Naive thymus-derived CD4-positive, alpha-beta T cell (primary cell): ENCODE measurements at regions of chr2 and their contacts with region 1.

Region 1: GRCh38 chr2:27954771-27955383 is 64.3 kb downstream of the BABAM2 start:
- DNase-seq: peak in 3 of 9 donors; percentile 11 to 21 (median 20)
- ATAC-seq: peak; percentile 75
- H3K4me3 ChIP-seq: no peak overlapping the region
- H3K4me3 Mint-ChIP-seq: peak overlapping the region in 9 of 10 donors; percentile 31 to 68 (median 53)
- H3K27ac ChIP-seq: no peak overlapping the region
- H3K27ac Mint-ChIP-seq: peak overlapping the region in 8 of 9 donors; percentile 30 to 84 (median 55)
- H3K4me1 ChIP-seq: peaks cover 17 to 30% of the 10 kb centered on the region in 2 donors
- H3K4me1 Mint-ChIP-seq: peaks cover 34 to 82% (median 69%) of the 10 kb centered on the region in 7 donors
- H3K27me3 ChIP-seq: no peaks in the 10 kb centered on the region
- H3K27me3 Mint-ChIP-seq: no peaks in the 10 kb centered on the region

Region 2: GRCh38 chr2:27901234-27901633 is 53.6 kb before region 1 on chr2:
- CTCF ChIA-PET with region 1: no interaction called
- POLR2A ChIA-PET with region 1: no interaction called
- intact Hi-C with region 1: no loop called
- DNase-seq: no peak
- ATAC-seq: no peak
- H3K4me3 ChIP-seq: no peak overlapping the region
- H3K4me3 Mint-ChIP-seq: no peak overlapping the region
- H3K27ac ChIP-seq: no peak overlapping the region
- H3K27ac Mint-ChIP-seq: no peak overlapping the region
- H3K4me1 ChIP-seq: no peaks in the 10 kb centered on the region
- H3K4me1 Mint-ChIP-seq: peaks cover 20 to 53% (median 35%) of the 10 kb centered on the region in 7 donors
- H3K27me3 ChIP-seq: no peaks in the 10 kb centered on the region
- H3K27me3 Mint-ChIP-seq: no peaks in the 10 kb centered on the region

Region 3: GRCh38 chr2:27966483-27966882 is 11.6 kb after region 1 on chr2:
- CTCF ChIA-PET with region 1: no interaction called
- POLR2A ChIA-PET with region 1: no interaction called
- intact Hi-C with region 1: loop called in 1 of 2 experiments (anchors 1 kb)
- DNase-seq: no peak
- ATAC-seq: no peak
- H3K4me3 ChIP-seq: no peak overlapping the region
- H3K4me3 Mint-ChIP-seq: peak overlapping the region in 9 of 10 donors; percentile 4 to 84 (median 38)
- H3K27ac ChIP-seq: no peak overlapping the region
- H3K27ac Mint-ChIP-seq: peak overlapping the region in 8 of 9 donors; percentile 3 to 93 (median 70)
- H3K4me1 ChIP-seq: peaks cover 14 to 18% of the 10 kb centered on the region in 2 donors
- H3K4me1 Mint-ChIP-seq: peaks cover 22 to 55% (median 37%) of the 10 kb centered on the region in 7 donors
- H3K27me3 ChIP-seq: no peaks in the 10 kb centered on the region
- H3K27me3 Mint-ChIP-seq: no peaks in the 10 kb centered on the region

Region 4: DNA sequence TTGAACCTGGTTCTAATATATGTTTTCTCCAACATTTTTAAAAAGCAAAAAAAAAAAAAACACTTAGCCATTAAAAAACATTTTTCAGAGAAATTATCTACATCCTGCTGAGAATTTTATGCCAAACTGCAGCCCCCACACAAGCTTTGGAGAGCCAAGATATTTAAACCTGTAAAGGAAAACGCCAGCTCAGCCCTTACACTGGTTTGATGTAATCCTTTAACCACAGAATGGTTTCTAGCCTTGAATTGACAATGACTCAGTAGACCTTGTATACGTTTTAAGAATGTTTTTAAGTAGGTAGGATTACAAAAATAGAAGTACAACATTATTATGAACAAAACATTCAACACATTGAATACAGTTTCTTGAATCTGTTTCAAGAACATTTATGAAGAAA is 49.2 kb after region 1 on chr2:
- CTCF ChIA-PET with region 1: no interaction called
- POLR2A ChIA-PET with region 1: no interaction called
- intact Hi-C with region 1: loop called in 1 of 2 experiments (anchors 5 kb)
- DNase-seq: no peak
- ATAC-seq: no peak
- H3K4me3 ChIP-seq: no peak overlapping the region
- H3K4me3 Mint-ChIP-seq: peak overlapping the region in 2 of 10 donors; percentile 0 to 10
- H3K27ac ChIP-seq: no peak overlapping the region
- H3K27ac Mint-ChIP-seq: no peak overlapping the region
- H3K4me1 ChIP-seq: no peaks in the 10 kb centered on the region
- H3K4me1 Mint-ChIP-seq: peaks cover 6 to 24% (median 22%) of the 10 kb centered on the region in 7 donors
- H3K27me3 ChIP-seq: no peaks in the 10 kb centered on the region
- H3K27me3 Mint-ChIP-seq: no peaks in the 10 kb centered on the region